ENCODE measurements at regions of chr6 and their contacts with region 1.

Region 1: GRCh38 chr6:158611541-158612370 is 32.8 kb downstream of the DYNLT1 start:
- DNase-seq: no peak
- ATAC-seq: no peak
- H3K4me3 ChIP-seq: no peak overlapping the region
- H3K27ac ChIP-seq: no peak overlapping the region
- H3K4me1 ChIP-seq: no peaks in the 10 kb centered on the region
- H3K27me3 ChIP-seq: no peaks in the 10 kb centered on the region
- CTCF ChIP-seq: no peak
- EP300 ChIP-seq: no peak
- POLR2A ChIP-seq: no peak
- RAD21 ChIP-seq: no peak

Region 2: DNA sequence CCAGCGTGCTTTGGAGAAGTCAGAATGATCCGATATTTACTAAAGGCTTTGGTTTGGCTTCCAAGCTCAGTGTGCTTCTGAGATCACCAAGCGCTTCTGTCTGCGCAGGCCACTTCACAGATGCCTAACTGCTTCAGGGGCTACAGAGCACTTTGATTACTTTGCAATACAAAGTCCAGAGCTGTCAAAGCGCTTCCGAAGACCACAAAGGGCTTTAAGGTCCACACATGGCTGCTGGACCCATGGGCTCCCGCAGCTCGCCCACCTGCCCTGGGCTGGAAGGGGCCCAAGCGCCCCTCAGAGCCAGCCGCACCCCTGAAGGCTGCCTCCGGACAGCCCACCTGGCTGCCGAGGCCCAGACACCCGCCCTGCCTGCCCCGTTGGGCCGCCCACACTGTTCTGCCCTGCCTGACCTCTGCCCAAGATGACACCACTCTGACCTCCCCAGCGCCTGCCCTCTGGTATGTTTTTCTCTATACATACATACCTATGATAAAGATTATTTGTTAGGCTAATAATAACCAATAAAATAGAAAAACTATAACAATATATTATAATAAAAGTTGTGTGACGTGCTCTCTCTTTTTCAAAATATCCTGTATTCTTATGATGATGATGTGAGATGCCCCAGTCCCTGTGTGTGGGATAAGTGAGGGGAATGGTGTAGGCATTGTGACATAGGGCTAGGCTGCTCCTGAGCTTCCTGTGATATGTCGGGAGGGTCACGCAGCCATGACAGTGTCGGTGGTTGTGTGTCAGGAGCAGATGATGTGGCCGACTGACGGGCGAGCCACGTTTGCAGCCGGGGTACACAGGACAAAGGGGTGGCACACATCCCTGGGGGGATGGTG is 10.2 kb after region 1 on chr6:
- CTCF ChIA-PET with region 1: no interaction called
- POLR2A ChIA-PET with region 1: interaction called, 10 read pairs
- in situ Hi-C with region 1: no loop called
- intact Hi-C with region 1: no loop called
- DNase-seq: no peak
- ATAC-seq: no peak
- H3K4me3 ChIP-seq: no peak overlapping the region
- H3K27ac ChIP-seq: no peak overlapping the region
- H3K4me1 ChIP-seq: no peaks in the 10 kb centered on the region
- H3K27me3 ChIP-seq: no peaks in the 10 kb centered on the region
- CTCF ChIP-seq: no peak
- EP300 ChIP-seq: no peak
- POLR2A ChIP-seq: no peak
- RAD21 ChIP-seq: no peak

Measured in K562 (cell line).